ENCODE measurements at regions of chr7 and their contacts with region 1.

Region 1: GRCh38 chr7:128739048-128739962 is at the start of gene CALU:
- DNase-seq: peak; percentile 99
- H3K4me3 ChIP-seq: peak within 1 kb of the TSS; percentile 79 to 96 (median 94)
- H3K27ac ChIP-seq: peak within 1 kb of the TSS; percentile 93 to 99 (median 96)
- H3K4me1 ChIP-seq: peaks cover 3 to 50% (median 40%) of the 10 kb centered on the region in 4 donors
- H3K27me3 ChIP-seq: no peaks in the 10 kb centered on the region
- CTCF ChIP-seq: no peak
- EP300 ChIP-seq: peak in 1 of 4 donors; percentile 43
- POLR2A ChIP-seq: peak; percentile 80 to 95
- total RNA-seq, gene CALU: 153 to 250 (median 198) TPM

Region 2: DNA sequence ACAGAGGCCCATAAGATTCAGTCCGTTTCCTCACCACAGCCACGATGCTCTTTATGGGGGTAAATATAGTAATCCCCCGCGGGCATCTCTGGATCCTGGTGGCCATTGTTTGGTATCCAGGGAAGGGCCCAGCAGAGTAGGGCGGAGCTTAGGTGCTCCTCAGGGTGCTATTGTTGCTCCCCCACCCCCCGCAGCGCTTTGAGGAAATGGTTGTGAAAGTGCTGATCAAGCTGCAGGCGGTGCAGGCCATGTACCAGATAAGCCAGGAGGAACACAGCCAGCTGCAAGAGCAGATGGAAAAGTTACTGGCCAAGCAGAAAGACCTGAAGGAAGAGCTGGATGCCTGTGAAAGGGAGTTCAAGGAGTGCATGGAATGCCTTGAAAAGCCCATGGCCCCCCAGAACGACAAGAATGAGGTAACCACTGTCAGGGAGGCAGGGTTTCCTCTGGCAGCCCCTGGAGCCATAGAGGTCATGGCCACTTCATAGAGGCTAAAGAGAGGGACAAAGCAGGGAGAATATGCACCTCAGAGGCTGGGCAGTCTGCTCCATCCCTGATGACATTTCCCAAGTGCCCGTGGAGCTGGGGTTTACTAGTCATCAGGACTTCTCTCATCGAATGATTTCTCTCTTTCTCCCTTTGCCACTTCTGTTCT is 73.3 kb after region 1 on chr7:
- intact Hi-C with region 1: no loop called
- DNase-seq: no peak
- H3K4me3 ChIP-seq: no peak overlapping the region
- H3K27ac ChIP-seq: no peak overlapping the region
- H3K4me1 ChIP-seq: peaks cover 0 to 7% (median 3%) of the 10 kb centered on the region in 4 donors
- H3K27me3 ChIP-seq: no peaks in the 10 kb centered on the region
- CTCF ChIP-seq: no peak
- EP300 ChIP-seq: no peak
- POLR2A ChIP-seq: no peak

Region 3: GRCh38 chr7:128830231-128831177 is 91.2 kb after region 1 on chr7 and contains the start of gene FLNC:
- intact Hi-C with region 1: loop called (anchors 5 kb)
- DNase-seq: peak; percentile 87
- H3K4me3 ChIP-seq: peak within 1 kb of the TSS; percentile 66 to 90 (median 83)
- H3K27ac ChIP-seq: peak within 1 kb of the TSS; percentile 95 to 99 (median 98)
- H3K4me1 ChIP-seq: peaks cover 2 to 79% (median 67%) of the 10 kb centered on the region in 4 donors
- H3K27me3 ChIP-seq: no peaks in the 10 kb centered on the region
- CTCF ChIP-seq: no peak
- EP300 ChIP-seq: no peak
- POLR2A ChIP-seq: peak; percentile 72 to 78
- total RNA-seq, gene FLNC: 95.3 to 489 (median 242) TPM

Region 4: GRCh38 chr7:128869138-128869943 is 130.0 kb after region 1 on chr7:
- intact Hi-C with region 1: loop called (anchors 5 kb)
- DNase-seq: peak; percentile 84
- H3K4me3 ChIP-seq: peak overlapping the region; percentile 33 to 59 (median 58)
- H3K27ac ChIP-seq: peak overlapping the region in 2 of 4 donors; percentile 39 to 49
- H3K4me1 ChIP-seq: peaks cover 0 to 22% (median 21%) of the 10 kb centered on the region in 4 donors
- H3K27me3 ChIP-seq: no peaks in the 10 kb centered on the region
- CTCF ChIP-seq: peak in 2 of 4 experiments; percentile 14 to 17
- EP300 ChIP-seq: no peak
- POLR2A ChIP-seq: no peak

Region 5: GRCh38 chr7:128883622-128884501 is 144.6 kb after region 1 on chr7:
- intact Hi-C with region 1: loop called (anchors 5 kb)
- DNase-seq: peak; percentile 88
- H3K4me3 ChIP-seq: no peak overlapping the region
- H3K27ac ChIP-seq: no peak overlapping the region
- H3K4me1 ChIP-seq: peaks cover 0 to 9% (median 3%) of the 10 kb centered on the region in 4 donors
- H3K27me3 ChIP-seq: peaks cover 0 to 10% (median 0%) of the 10 kb centered on the region in 3 donors
- CTCF ChIP-seq: peak; percentile 83 to 97 (median 89)
- EP300 ChIP-seq: no peak
- POLR2A ChIP-seq: no peak

Measured in sigmoid colon (tissue), 7 donors.